Colonic mucosa (tissue), 4 donors: ENCODE measurements at regions of chr7 and their contacts with region 1.

Region 1: DNA sequence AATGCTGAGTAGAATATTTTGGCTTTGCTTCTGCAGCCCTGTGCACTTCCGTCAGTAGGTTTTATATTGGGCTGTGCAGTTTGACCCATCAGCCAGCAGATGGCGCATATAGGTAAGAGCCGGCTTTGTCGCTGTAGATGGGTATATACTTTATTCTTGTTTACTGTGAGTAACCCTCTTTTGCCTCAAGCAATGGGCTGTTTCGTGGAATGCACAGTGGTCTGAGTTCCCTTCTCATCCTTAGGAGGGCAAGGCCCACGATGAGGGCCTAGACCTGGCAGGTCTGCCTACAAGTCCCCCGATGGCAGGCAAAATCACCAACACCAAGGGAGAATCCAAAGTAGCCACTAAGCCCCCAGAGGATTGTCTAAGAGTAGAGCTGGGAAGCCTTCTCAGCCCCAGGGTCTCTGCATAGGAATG is 1002.9 kb upstream of the KCND2 start:
- DNase-seq: peak; percentile 33
- H3K4me3 ChIP-seq: no peak overlapping the region
- H3K27ac ChIP-seq: no peak overlapping the region
- H3K4me1 ChIP-seq: no peaks in the 10 kb centered on the region
- H3K27me3 ChIP-seq: no peaks in the 10 kb centered on the region
- CTCF ChIP-seq: peak; percentile 63

Region 2: DNA sequence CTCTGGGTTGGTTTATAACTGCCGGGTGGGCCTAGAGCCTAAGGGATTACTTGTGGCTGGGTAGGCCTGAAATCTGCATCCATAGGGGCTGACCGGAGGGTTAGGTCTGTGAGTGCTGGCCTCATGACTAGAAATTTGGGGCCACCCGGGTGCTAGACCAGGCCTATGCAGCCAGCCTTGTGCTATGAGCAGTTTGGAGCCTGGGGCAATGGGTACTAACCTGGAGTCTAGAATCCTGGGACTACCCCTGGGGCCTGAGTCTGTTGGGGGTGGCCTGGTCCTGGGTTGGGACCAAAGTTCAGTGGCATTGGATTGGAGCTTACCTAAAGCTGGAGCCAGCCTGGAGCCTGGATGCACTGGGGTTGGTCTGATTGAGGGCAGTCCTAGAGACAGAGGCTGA is 50.4 kb before region 1 on chr7:
- intact Hi-C with region 1: no loop called
- DNase-seq: no peak
- H3K4me3 ChIP-seq: no peak overlapping the region
- H3K27ac ChIP-seq: no peak overlapping the region
- H3K4me1 ChIP-seq: no peaks in the 10 kb centered on the region
- H3K27me3 ChIP-seq: no peaks in the 10 kb centered on the region
- CTCF ChIP-seq: no peak

Region 3: DNA sequence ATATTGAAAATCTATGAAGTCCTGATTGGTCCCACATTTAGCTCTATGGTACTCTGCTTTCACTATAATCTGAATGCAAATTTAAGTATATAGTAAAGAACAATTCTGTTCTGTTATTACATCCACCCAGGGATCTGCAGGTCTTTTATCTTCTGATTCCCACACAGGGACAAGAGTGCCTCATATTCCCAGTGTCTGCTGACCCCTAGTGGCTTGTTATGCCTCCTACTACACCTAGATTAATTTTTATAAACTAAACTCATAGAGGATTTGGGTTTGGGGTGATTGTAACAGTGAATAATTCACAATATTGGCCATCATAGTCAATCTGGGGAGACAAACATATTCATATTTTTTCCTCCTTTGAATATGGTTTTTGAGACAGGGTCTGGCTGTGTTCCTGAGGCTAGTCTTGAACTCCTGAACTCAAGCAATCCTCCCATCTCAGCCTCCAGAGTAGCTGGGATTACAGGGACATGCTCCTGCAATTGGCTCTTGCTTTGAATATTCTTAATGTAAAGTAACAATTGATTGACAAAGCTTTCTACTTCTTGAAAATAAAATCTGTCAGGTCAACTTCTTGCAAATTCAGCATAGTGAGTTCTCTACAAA is 1285.0 kb after region 1 on chr7:
- intact Hi-C with region 1: loop called (anchors 10 kb)
- DNase-seq: peak; percentile 25
- H3K4me3 ChIP-seq: no peak overlapping the region
- H3K27ac ChIP-seq: no peak overlapping the region
- H3K4me1 ChIP-seq: no peaks in the 10 kb centered on the region
- H3K27me3 ChIP-seq: no peaks in the 10 kb centered on the region
- CTCF ChIP-seq: peak; percentile 44